H1 (cell line): ENCODE measurements at regions of chr1 and their contacts with region 1.

Region 1: GRCh38 chr1:244957525-244957924 is 93.2 kb upstream of the HNRNPU start:
- DNase-seq: no peak
- H3K4me3 ChIP-seq: no peak overlapping the region
- H3K27ac ChIP-seq: no peak overlapping the region
- H3K4me1 ChIP-seq: no peaks in the 10 kb centered on the region
- H3K27me3 ChIP-seq: no peaks in the 10 kb centered on the region
- CTCF ChIP-seq: no peak
- EP300 ChIP-seq: no peak
- POLR2A ChIP-seq: no peak
- RAD21 ChIP-seq: no peak

Region 2: GRCh38 chr1:244970661-244971551 is 13.4 kb after region 1 on chr1:
- CTCF ChIA-PET with region 1: no interaction called
- POLR2A ChIA-PET with region 1: interaction called, 11 read pairs
- DNase-seq: peak; percentile 84 to 96
- H3K4me3 ChIP-seq: peak overlapping the region; percentile 65 to 88 (median 76)
- H3K27ac ChIP-seq: peak overlapping the region; percentile 99
- H3K4me1 ChIP-seq: peaks cover 3 to 9% (median 7%) of the 10 kb centered on the region in 4 experiments; a peak in 6 of 7 replicates
- H3K27me3 ChIP-seq: no peaks in the 10 kb centered on the region
- CTCF ChIP-seq: peak; percentile 24 to 43 (median 24); a peak in 3 of 4 replicates
- EP300 ChIP-seq: peak in 1 of 2 experiments; percentile 40; a peak in 2 of 3 replicates
- POLR2A ChIP-seq: peak; percentile 90 to 93
- RAD21 ChIP-seq: peak in 1 of 2 experiments; percentile 17; a peak in 2 of 4 replicates

Region 3: DNA sequence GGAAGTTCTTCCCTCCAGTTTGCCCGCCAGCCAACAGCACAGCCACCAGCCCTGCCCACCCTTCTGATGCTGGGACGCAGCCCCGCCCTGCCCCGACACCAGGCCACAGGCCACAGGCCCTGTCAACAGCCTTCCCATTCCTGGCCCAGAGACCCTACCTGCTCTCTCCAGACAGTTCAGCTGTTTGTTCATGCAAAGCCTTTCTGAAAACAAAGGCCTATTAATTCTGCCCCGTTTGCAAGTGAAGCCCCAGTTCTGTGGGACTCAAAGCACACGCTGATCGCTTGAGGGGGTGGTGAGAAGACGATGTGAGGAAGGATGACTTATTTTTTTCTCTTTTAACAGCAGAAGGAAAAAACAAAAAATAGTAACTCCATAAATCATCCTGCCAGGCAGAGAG is 141.9 kb after region 1 on chr1:
- CTCF ChIA-PET with region 1: no interaction called
- POLR2A ChIA-PET with region 1: no interaction called
- DNase-seq: no peak
- H3K4me3 ChIP-seq: no peak overlapping the region
- H3K27ac ChIP-seq: no peak overlapping the region
- H3K4me1 ChIP-seq: peaks cover 0 to 2% (median 0%) of the 10 kb centered on the region in 4 experiments; a peak in 1 of 7 replicates
- H3K27me3 ChIP-seq: no peaks in the 10 kb centered on the region
- CTCF ChIP-seq: no peak
- EP300 ChIP-seq: no peak
- POLR2A ChIP-seq: no peak
- RAD21 ChIP-seq: no peak